ENCODE measurements at regions of chr9 and their contacts with region 1.

Region 1: DNA sequence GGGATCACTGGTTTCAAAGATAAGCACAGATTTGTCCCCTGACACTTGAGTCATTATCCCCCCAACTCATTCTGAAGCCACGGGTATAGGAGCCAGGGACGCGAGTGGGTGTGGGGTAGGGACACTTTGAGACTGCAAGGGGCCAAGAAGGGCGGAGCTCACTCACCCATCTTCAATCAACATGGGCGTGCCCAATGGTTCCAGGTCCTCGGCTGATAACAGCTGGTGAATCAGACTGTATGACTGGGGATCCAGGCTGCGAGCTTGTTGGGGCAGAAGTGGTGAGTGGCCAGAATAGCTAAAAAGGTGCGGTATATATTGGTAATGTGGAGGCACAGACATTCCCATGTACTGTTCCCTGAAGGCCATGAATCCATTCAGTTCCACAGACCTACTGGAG is 30.7 kb upstream of the NR5A1 start:
- DNase-seq: no peak
- H3K4me3 ChIP-seq: no peak overlapping the region
- H3K27ac ChIP-seq: no peak overlapping the region
- H3K4me1 ChIP-seq: peaks cover 0 to 2% (median 0%) of the 10 kb centered on the region in 4 experiments
- H3K27me3 ChIP-seq: no peaks in the 10 kb centered on the region

Region 2: DNA sequence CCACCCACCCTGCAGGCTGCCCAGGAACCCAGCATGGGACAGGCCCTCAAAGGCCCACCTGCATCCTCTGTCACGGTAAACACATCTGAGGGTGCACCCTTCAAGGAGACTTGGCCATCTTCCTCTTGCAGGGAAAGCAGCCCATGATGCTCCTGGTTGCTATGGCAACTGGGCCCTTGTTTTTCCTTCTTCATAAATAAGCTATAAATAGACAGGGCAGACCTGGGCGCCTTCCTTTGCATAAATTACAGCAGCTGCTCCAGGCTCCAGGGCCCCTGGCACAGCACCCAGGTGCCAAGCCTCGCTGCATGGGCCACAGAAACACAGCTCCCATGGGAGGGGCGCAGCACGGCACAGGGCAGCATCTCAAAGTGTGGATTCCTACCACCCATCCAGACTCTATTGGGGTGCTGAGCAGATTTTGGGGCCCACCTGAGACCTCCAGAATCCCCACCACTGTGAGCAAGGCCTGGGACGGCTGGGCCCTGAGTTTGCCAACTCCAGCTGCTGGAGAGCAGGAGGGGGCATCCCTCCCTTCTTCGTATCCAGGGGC is 116.9 kb before region 1 on chr9:
- CTCF ChIA-PET with region 1: interaction called, 79 read pairs
- POLR2A ChIA-PET with region 1: no interaction called
- DNase-seq: peak; percentile 31 to 77 (median 68)
- H3K4me3 ChIP-seq: no peak overlapping the region
- H3K27ac ChIP-seq: no peak overlapping the region
- H3K4me1 ChIP-seq: peaks cover 0 to 4% (median 2%) of the 10 kb centered on the region in 4 experiments
- H3K27me3 ChIP-seq: no peaks in the 10 kb centered on the region

Region 3: DNA sequence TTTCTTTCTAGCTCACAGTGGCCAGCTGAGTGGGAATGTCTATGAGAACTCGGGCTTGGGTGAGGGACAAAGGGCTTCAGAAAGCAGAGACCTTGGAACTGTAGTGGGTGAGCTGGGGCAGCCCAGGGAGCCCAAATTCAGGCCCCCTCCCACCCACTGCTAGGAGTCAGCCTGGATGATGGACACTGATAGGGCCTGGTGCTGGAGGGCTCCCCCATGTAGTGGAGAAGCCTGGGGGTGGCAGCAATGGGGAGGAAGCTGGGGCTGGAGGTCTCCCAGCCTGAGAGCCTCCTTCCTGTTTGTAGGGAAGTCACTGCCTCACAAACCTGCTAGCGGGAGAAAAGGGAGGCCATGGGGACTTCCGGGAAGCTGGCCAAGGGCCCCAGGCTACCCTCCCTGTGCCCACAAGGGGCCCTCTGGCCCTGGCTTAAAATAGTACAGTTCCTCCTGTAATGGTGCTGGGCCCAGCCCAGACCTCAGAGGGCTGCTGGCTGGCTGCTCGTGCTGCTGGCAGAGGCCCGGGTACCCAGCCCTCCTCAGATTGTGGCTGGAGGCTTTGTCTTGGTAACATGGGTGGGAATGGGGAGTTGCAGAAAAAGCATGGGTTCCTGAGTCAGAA is 24.4 kb before region 1 on chr9:
- CTCF ChIA-PET with region 1: interaction called, 15 read pairs
- POLR2A ChIA-PET with region 1: no interaction called
- DNase-seq: peak in 2 of 3 donors; percentile 45 to 51
- H3K4me3 ChIP-seq: peak overlapping the region in 2 of 7 experiments; percentile 10 to 41
- H3K27ac ChIP-seq: no peak overlapping the region
- H3K4me1 ChIP-seq: peaks cover 2 to 45% (median 35%) of the 10 kb centered on the region in 4 experiments
- H3K27me3 ChIP-seq: no peaks in the 10 kb centered on the region

Region 4: GRCh38 chr9:124522121-124523098 is 15.5 kb before region 1 on chr9:
- CTCF ChIA-PET with region 1: interaction called, 29 read pairs
- POLR2A ChIA-PET with region 1: no interaction called
- DNase-seq: no peak
- H3K4me3 ChIP-seq: no peak overlapping the region
- H3K27ac ChIP-seq: no peak overlapping the region
- H3K4me1 ChIP-seq: peaks cover 0 to 6% (median 0%) of the 10 kb centered on the region in 4 experiments
- H3K27me3 ChIP-seq: no peaks in the 10 kb centered on the region

Region 5: DNA sequence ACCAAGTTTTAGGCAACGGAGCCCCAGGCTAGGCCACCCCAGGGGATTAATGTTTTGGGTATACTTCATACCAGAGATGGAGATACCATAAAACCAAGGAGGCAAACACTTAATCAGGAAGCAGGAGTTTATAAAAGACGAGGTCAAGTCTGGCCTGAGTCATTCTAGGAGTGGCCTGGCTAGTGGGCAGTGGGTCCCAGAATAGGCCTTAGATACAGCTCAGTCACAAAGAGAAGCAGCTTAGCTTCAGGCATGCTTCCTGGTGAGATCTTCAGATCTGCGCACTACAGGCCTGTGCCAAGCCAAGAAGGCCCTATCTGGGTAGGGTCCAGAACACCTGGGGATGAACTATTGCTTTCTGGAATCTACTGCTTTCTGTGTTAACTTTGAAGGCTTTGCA is 10.1 kb before region 1 on chr9:
- CTCF ChIA-PET with region 1: interaction called, 29 read pairs
- POLR2A ChIA-PET with region 1: no interaction called
- DNase-seq: no peak
- H3K4me3 ChIP-seq: no peak overlapping the region
- H3K27ac ChIP-seq: no peak overlapping the region
- H3K4me1 ChIP-seq: no peaks in the 10 kb centered on the region
- H3K27me3 ChIP-seq: no peaks in the 10 kb centered on the region

Region 6: DNA sequence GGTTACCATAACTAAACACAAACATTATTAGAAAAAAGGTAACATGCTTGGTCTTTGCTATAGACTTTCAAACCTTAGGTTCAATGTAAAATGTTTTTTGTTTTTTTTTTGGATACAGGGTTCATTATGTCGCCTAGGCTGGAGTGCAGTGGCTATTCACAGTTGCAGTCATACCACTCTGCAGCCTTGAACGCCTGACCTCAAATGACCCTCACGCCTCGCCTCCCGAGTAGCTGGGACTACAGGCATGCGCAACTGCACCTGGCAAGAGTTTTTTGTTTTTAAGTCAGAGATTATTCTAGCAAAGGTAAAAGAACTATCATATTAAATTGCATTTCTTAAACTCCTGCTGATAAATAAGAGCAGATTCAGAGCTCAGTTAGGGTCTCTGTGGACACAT is 24.4 kb after region 1 on chr9:
- CTCF ChIA-PET with region 1: interaction called, 14 read pairs
- POLR2A ChIA-PET with region 1: no interaction called
- DNase-seq: no peak
- H3K4me3 ChIP-seq: no peak overlapping the region
- H3K27ac ChIP-seq: no peak overlapping the region
- H3K4me1 ChIP-seq: peaks cover 0 to 9% (median 6%) of the 10 kb centered on the region in 4 experiments
- H3K27me3 ChIP-seq: no peaks in the 10 kb centered on the region